A549 (cell line): ENCODE measurements at regions of chr10 and their contacts with region 1.

Region 1: DNA sequence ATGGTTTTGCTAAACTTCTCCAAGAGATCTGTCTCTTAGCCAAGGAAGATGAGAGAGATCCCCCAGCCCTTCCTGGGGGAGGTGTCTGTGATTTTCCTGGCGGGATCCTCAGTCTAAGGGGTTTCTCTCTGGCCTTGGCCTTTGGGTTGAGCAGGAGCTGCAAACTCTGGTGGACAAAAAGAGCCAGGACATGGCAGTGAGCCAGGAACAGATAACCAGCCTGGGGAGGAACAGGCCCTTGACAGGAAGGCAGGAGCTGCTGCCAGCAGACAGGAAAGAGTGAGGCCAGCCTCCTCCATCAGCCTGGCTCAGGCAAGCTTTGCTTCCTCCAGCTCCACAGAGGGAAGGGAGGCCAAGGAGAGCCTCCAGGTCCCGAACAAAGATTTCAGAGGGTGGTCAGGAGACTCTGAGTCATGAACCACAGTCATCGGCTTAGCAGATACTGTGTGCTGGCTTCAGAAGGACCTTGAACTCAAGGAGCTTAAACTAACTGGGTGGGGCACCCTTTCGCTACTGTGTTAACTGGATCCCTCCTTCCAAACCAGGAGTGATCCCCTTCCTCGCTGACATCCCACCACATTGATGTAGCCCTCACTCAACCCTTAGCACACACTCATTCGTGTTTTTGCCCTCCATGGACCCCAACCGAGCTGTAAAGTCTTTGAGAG is 34.7 kb downstream of the DDIT4 start:
- DNase-seq: peak in 1 of 2 experiments; percentile 89
- ATAC-seq: peak; percentile 86
- H3K4me3 ChIP-seq: 0 out of 3 replicates have a peak overlapping the region, but pooled peaks have one; percentile 11
- H3K27ac ChIP-seq: peak overlapping the region; percentile 90 to 98
- H3K4me1 ChIP-seq: peaks cover 59% of the 10 kb centered on the region
- CTCF ChIP-seq: no peak
- EP300 ChIP-seq: peak in 1 of 2 experiments; percentile 33; a peak in 1 of 5 replicates
- POLR2A ChIP-seq: no peak
- RAD21 ChIP-seq: no peak

Region 2: DNA sequence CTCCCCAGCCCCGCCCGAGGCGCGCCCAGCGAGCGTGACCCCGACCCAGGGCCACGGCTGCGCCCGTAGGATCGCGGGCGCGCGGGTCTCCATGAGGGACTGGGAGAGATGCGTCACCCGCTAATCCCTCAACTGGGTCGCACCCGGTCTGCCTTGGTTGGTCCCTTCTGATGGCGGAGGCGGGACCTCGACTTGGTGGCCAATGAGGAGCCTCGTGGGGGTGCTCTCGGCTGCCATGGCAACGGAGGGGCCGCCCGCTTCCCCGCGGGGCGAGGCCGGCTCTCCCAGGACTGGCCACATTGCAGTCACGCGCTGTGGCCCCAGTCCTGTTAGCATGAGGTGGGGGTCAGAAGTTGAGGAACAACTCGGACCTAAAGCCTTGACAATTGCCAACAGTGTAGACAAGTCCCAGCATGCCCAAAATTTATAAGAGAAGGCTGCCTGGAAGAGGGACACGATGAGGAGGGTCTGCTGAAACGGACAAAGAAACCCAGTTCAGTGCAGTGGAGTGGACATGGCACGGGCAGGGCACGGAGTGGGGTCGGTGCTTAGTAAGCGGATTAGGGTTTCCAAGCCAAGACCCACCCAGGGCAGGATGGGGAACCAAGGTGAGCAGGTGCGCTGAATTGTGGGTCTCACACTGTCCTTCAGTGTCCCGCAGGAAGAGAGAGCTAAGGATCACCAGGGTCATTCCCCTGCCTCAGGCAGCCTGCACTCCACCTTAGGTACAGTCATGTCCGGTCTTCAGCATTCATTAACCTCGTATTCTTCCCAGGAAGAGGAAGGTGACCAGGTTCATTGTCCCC is 10.3 kb before region 1 on chr10:
- CTCF ChIA-PET with region 1: interaction called, 3 read pairs
- POLR2A ChIA-PET with region 1: interaction called, 22 read pairs
- DNase-seq: peak; percentile 89 to 99
- ATAC-seq: peak; percentile 91 to 93
- H3K4me3 ChIP-seq: peak overlapping the region; percentile 55
- H3K27ac ChIP-seq: peak overlapping the region; percentile 98 to 100
- H3K4me1 ChIP-seq: peaks cover 41% of the 10 kb centered on the region
- CTCF ChIP-seq: no peak
- EP300 ChIP-seq: no peak
- POLR2A ChIP-seq: peak; percentile 36
- RAD21 ChIP-seq: peak in 1 of 2 experiments; percentile 21; a peak in 1 of 5 replicates